CD8-positive, alpha-beta T cell (primary cell): ENCODE measurements at regions of chr19 and their contacts with region 1.

Region 1: DNA sequence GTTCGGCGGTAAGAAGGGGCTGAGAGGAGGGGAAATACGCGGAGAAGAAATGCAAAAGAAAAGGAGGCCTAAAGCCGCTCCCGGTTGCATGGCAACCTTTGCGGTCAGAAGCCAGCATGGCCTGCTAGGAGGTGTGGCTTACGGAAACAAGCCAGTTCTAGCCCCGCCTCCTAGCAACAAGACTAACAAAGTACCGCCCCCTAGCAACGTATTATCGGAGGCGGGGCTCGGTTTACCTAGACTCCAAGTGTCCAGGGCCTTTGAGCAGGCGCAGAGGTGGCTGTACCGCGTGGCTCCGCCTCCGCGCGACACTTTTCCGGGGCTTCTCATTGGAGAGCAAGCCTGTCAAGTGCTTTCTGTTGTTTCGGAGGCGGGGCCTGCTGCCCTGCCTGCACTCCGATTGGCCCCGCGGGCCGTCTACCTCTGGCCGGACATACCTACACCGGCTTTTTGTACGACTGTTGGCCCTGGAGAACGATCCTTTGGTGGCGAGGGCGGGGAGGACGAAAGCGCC is 337 bp upstream of the CYTH2 start:
- DNase-seq: peak; percentile 98 to 100 (median 99)
- ATAC-seq: peak; percentile 85
- H3K4me3 ChIP-seq: peak overlapping the region; percentile 83 to 95
- H3K4me3 Mint-ChIP-seq: peak overlapping the region; percentile 90
- H3K27ac ChIP-seq: peak overlapping the region; percentile 75 to 90
- H3K27ac Mint-ChIP-seq: peak overlapping the region; percentile 85
- H3K4me1 ChIP-seq: peaks cover 15% of the 10 kb centered on the region
- H3K4me1 Mint-ChIP-seq: peaks cover 21% of the 10 kb centered on the region
- H3K27me3 ChIP-seq: no peaks in the 10 kb centered on the region
- H3K27me3 Mint-ChIP-seq: no peaks in the 10 kb centered on the region
- CTCF ChIP-seq: no peak

Region 2: GRCh38 chr19:48480558-48481500 is 12.0 kb after region 1 on chr19:
- CTCF ChIA-PET with region 1: interaction called, 3 read pairs
- POLR2A ChIA-PET with region 1: interaction called, 6 read pairs
- intact Hi-C with region 1: loop called (anchors 1 kb)
- DNase-seq: peak in 8 of 9 experiments; percentile 45 to 78 (median 59)
- ATAC-seq: peak; percentile 82
- H3K4me3 ChIP-seq: peak overlapping the region; percentile 63 to 66
- H3K4me3 Mint-ChIP-seq: peak overlapping the region; percentile 83
- H3K27ac ChIP-seq: peak overlapping the region; percentile 53 to 72
- H3K27ac Mint-ChIP-seq: peak overlapping the region; percentile 84
- H3K4me1 ChIP-seq: peaks cover 4% of the 10 kb centered on the region
- H3K4me1 Mint-ChIP-seq: peaks cover 19% of the 10 kb centered on the region
- H3K27me3 ChIP-seq: no peaks in the 10 kb centered on the region
- H3K27me3 Mint-ChIP-seq: no peaks in the 10 kb centered on the region
- CTCF ChIP-seq: no peak

Region 3: GRCh38 chr19:48596679-48597465 is 128.0 kb after region 1 on chr19:
- CTCF ChIA-PET with region 1: no interaction called
- POLR2A ChIA-PET with region 1: no interaction called
- intact Hi-C with region 1: no loop called
- DNase-seq: peak in 6 of 9 experiments; percentile 30 to 78 (median 58)
- ATAC-seq: peak; percentile 91
- H3K4me3 ChIP-seq: peak overlapping the region; percentile 27 to 34
- H3K4me3 Mint-ChIP-seq: peak overlapping the region; percentile 68
- H3K27ac ChIP-seq: peak overlapping the region; percentile 23 to 63
- H3K27ac Mint-ChIP-seq: peak overlapping the region; percentile 90
- H3K4me1 ChIP-seq: peaks cover 7% of the 10 kb centered on the region
- H3K4me1 Mint-ChIP-seq: peaks cover 12% of the 10 kb centered on the region
- H3K27me3 ChIP-seq: no peaks in the 10 kb centered on the region
- H3K27me3 Mint-ChIP-seq: no peaks in the 10 kb centered on the region
- CTCF ChIP-seq: no peak